ENCODE measurements at regions of chr9 and their contacts with region 1.

Region 1: GRCh38 chr9:129028192-129028957 is at the start of gene SH3GLB2:
- DNase-seq: peak; percentile 95
- H3K4me3 ChIP-seq: peak within 1 kb of the TSS; percentile 47 to 74 (median 54)
- H3K27ac ChIP-seq: no peak within 1 kb of the TSS
- H3K4me1 ChIP-seq: peaks cover 7% of the 10 kb centered on the region
- H3K27me3 ChIP-seq: no peaks in the 10 kb centered on the region
- CTCF ChIP-seq: peak; percentile 78 to 93
- POLR2A ChIP-seq: no peak
- total RNA-seq, gene SH3GLB2: 55.8 and 58.8 TPM in 2 replicates

Region 2: GRCh38 chr9:128733256-128733655 is 295.1 kb before region 1 on chr9:
- CTCF ChIA-PET with region 1: no interaction called
- POLR2A ChIA-PET with region 1: no interaction called
- dilution Hi-C with region 1: no loop called
- intact Hi-C with region 1: loop called (anchors 10 kb)
- DNase-seq: peak; percentile 88
- H3K4me3 ChIP-seq: no peak overlapping the region
- H3K27ac ChIP-seq: no peak overlapping the region
- H3K4me1 ChIP-seq: no peaks in the 10 kb centered on the region
- H3K27me3 ChIP-seq: no peaks in the 10 kb centered on the region
- CTCF ChIP-seq: peak; percentile 75 to 85
- POLR2A ChIP-seq: no peak

Region 3: GRCh38 chr9:128786681-128787601 is 241.4 kb before region 1 on chr9 and contains the start of gene TBC1D13:
- CTCF ChIA-PET with region 1: no interaction called
- POLR2A ChIA-PET with region 1: no interaction called
- dilution Hi-C with region 1: no loop called
- intact Hi-C with region 1: loop called (anchors 1 kb)
- DNase-seq: peak; percentile 82
- H3K4me3 ChIP-seq: peak within 1 kb of the TSS; percentile 50 to 94 (median 77)
- H3K27ac ChIP-seq: no peak within 1 kb of the TSS
- H3K4me1 ChIP-seq: peaks cover 11% of the 10 kb centered on the region
- H3K27me3 ChIP-seq: no peaks in the 10 kb centered on the region
- CTCF ChIP-seq: no peak
- POLR2A ChIP-seq: peak; percentile 66
- total RNA-seq, gene TBC1D13: 34.9 and 35.1 TPM in 2 replicates

Region 4: GRCh38 chr9:128947422-128948301 is 80.7 kb before region 1 on chr9 and contains the starts of genes DOLK and NUP188:
- CTCF ChIA-PET with region 1: interaction called, 4 read pairs
- POLR2A ChIA-PET with region 1: no interaction called
- dilution Hi-C with region 1: no loop called
- intact Hi-C with region 1: loop called (anchors 5 kb)
- DNase-seq: peak; percentile 93
- H3K4me3 ChIP-seq: peak within 1 kb of the TSS; percentile 78 to 89 (median 88)
- H3K27ac ChIP-seq: peak within 1 kb of the TSS; percentile 70
- H3K4me1 ChIP-seq: peaks cover 4% of the 10 kb centered on the region
- H3K27me3 ChIP-seq: no peaks in the 10 kb centered on the region
- CTCF ChIP-seq: no peak
- POLR2A ChIP-seq: peak; percentile 87
- total RNA-seq, gene DOLK: 18.8 and 22.3 TPM in 2 replicates
- total RNA-seq, gene NUP188: 62.1 and 66.2 TPM in 2 replicates

Region 5: GRCh38 chr9:129006328-129007034 is 21.9 kb before region 1 on chr9:
- CTCF ChIA-PET with region 1: interaction called, 8 read pairs
- POLR2A ChIA-PET with region 1: no interaction called
- dilution Hi-C with region 1: no loop called
- intact Hi-C with region 1: loop called (anchors 1 kb)
- DNase-seq: peak; percentile 70
- H3K4me3 ChIP-seq: no peak overlapping the region
- H3K27ac ChIP-seq: no peak overlapping the region
- H3K4me1 ChIP-seq: no peaks in the 10 kb centered on the region
- H3K27me3 ChIP-seq: no peaks in the 10 kb centered on the region
- CTCF ChIP-seq: peak; percentile 91 to 93
- POLR2A ChIP-seq: no peak